GM10248 (cell line): ENCODE measurements at regions of chr12 and their contacts with region 1.

Region 1: DNA sequence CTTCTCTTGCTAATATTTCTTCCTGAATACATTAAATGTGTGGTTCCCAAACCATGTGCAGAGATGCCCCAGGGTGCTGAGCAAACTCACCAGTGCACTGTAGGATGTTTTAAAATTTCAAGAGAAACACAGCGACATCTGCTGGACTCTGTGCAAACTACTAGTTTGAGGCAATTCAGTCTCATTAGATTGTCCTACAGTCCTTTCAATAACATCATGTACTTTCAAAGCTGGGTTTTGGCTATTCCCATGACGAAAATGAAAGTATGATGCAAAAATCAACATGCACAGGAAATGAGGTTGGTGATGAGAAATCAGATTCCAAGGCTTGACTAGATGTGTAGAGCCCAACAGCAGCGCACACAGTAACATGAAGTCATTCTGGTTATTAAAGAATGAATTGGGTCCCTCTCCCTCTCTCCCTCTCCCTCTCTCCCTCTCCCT is 66.3 kb downstream of the CLIP1 start:
- DNase-seq: peak; percentile 70
- CTCF ChIP-seq: peak; percentile 72

Region 2: DNA sequence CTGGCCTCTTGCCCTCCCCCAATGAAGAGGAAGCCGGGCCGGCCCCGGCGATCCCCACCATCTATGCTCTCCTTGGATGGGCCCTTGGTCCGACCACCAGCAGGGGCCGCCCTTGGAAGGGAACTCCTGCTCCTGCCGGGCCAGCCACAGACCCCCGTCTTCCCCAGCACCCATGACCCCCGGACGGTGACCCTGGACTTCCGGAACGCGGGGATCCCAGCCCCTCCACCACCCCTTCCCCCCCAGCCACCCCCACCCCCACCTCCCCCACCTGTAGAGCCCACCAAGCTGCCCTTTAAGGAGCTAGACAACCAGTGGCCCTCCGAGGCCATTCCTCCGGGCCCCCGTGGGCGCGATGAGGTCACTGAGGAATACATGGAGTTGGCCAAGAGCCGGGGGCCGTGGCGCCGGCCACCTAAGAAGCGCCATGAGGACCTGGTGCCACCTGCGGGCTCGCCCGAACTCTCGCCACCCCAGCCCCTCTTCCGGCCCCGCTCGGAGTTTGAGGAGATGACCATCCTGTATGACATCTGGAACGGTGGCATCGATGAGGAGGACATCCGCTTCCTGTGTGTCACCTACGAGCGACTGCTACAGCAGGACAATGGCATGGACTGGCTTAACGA is 533.0 kb before region 1 on chr12:
- CTCF ChIA-PET with region 1: no interaction called
- POLR2A ChIA-PET with region 1: no interaction called
- DNase-seq: no peak
- CTCF ChIP-seq: peak; percentile 19

Region 3: GRCh38 chr12:122306407-122306806 is 49.8 kb before region 1 on chr12:
- CTCF ChIA-PET with region 1: interaction called, 14 read pairs
- POLR2A ChIA-PET with region 1: no interaction called
- DNase-seq: no peak
- CTCF ChIP-seq: peak; percentile 44

Region 4: GRCh38 chr12:122322501-122322900 is 33.7 kb before region 1 on chr12:
- CTCF ChIA-PET with region 1: interaction called, 28 read pairs
- POLR2A ChIA-PET with region 1: no interaction called
- DNase-seq: no peak
- CTCF ChIP-seq: no peak

Region 5: GRCh38 chr12:122336015-122336946 is 19.9 kb before region 1 on chr12:
- CTCF ChIA-PET with region 1: interaction called, 60 read pairs
- POLR2A ChIA-PET with region 1: no interaction called
- DNase-seq: peak; percentile 43
- CTCF ChIP-seq: peak; percentile 65

Region 6: DNA sequence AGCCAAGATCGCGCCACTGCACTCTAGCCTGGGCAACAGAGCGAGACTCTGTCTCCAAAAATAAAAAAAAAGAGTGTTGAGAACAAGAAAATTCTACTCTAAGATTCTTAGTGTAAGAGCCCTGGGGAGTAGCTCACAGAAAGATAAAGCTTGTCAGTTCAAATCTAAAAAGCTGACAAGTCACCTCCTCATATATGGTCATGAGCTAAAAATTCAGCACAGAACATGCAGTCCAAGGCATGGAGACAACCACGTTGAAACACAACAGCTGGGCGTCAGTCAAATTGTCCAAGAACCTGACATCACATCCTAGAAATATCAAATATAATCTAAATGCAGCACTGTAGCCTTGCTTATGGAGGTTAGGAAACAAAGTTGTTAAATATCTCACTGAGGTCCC is 18.5 kb after region 1 on chr12:
- CTCF ChIA-PET with region 1: interaction called, 16 read pairs
- POLR2A ChIA-PET with region 1: no interaction called
- DNase-seq: no peak
- CTCF ChIP-seq: no peak

Region 7: GRCh38 chr12:122381021-122381420 is 24.8 kb after region 1 on chr12:
- CTCF ChIA-PET with region 1: interaction called, 16 read pairs
- POLR2A ChIA-PET with region 1: no interaction called
- DNase-seq: no peak
- CTCF ChIP-seq: no peak